Tibial artery (tissue), 4 donors: ENCODE measurements at regions of chr16 and their contacts with region 1.

Region 1: GRCh38 chr16:27179500-27180072 is 23.7 kb upstream of the KDM8 start:
- DNase-seq: peak; percentile 90 to 91
- H3K4me3 ChIP-seq: no peak overlapping the region
- H3K27ac ChIP-seq: no peak overlapping the region
- H3K4me1 ChIP-seq: peaks cover 0 to 4% (median 0%) of the 10 kb centered on the region in 4 donors
- H3K27me3 ChIP-seq: peaks cover 0 to 18% of the 10 kb centered on the region in 2 donors
- CTCF ChIP-seq: peak; percentile 90

Region 2: GRCh38 chr16:27138266-27138665 is 41.3 kb before region 1 on chr16:
- intact Hi-C with region 1: no loop called
- DNase-seq: no peak
- H3K4me3 ChIP-seq: no peak overlapping the region
- H3K27ac ChIP-seq: no peak overlapping the region
- H3K4me1 ChIP-seq: no peaks in the 10 kb centered on the region
- H3K27me3 ChIP-seq: peaks cover 0 to 6% of the 10 kb centered on the region in 2 donors
- CTCF ChIP-seq: no peak

Region 3: DNA sequence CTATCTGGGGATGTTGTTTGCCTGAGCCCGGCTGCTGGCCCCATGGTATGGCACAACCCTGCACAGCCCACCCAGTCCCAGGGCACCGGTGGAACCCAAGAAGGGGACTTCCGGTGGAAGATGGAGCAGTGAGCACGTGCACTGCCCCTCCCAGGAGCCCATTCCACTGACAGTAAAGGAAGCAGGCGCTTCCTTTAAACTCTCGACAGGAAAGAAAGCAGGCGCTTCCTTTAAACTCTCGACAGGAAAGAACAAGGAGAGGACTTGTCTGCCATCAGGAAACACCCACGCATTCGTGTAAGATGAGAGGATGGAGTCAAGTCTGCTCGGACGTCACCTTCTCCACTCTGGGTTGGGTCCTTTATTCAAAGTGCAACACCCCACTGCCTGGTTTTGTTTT is 276.1 kb after region 1 on chr16:
- intact Hi-C with region 1: loop called (anchors 5 kb)
- DNase-seq: no peak
- H3K4me3 ChIP-seq: no peak overlapping the region
- H3K27ac ChIP-seq: no peak overlapping the region
- H3K4me1 ChIP-seq: no peaks in the 10 kb centered on the region
- H3K27me3 ChIP-seq: peaks cover 0 to 6% of the 10 kb centered on the region in 2 donors
- CTCF ChIP-seq: no peak